ENCODE measurements at regions of chr12 and their contacts with region 1.

Region 1: GRCh38 chr12:69157023-69157655 is 82.2 kb upstream of the CPSF6 start:
- DNase-seq: peak; percentile 85
- H3K4me3 Mint-ChIP-seq: peak overlapping the region; percentile 30
- H3K27ac Mint-ChIP-seq: peak overlapping the region; percentile 45
- H3K4me1 Mint-ChIP-seq: peaks cover 45% of the 10 kb centered on the region
- H3K27me3 Mint-ChIP-seq: no peaks in the 10 kb centered on the region

Region 2: GRCh38 chr12:68374307-68374982 is 782.7 kb before region 1 on chr12:
- intact Hi-C with region 1: loop called (anchors 1 kb)
- DNase-seq: peak; percentile 60
- H3K4me3 Mint-ChIP-seq: peak overlapping the region; percentile 31
- H3K27ac Mint-ChIP-seq: peak overlapping the region; percentile 93
- H3K4me1 Mint-ChIP-seq: peaks cover 68% of the 10 kb centered on the region
- H3K27me3 Mint-ChIP-seq: no peaks in the 10 kb centered on the region

Region 3: DNA sequence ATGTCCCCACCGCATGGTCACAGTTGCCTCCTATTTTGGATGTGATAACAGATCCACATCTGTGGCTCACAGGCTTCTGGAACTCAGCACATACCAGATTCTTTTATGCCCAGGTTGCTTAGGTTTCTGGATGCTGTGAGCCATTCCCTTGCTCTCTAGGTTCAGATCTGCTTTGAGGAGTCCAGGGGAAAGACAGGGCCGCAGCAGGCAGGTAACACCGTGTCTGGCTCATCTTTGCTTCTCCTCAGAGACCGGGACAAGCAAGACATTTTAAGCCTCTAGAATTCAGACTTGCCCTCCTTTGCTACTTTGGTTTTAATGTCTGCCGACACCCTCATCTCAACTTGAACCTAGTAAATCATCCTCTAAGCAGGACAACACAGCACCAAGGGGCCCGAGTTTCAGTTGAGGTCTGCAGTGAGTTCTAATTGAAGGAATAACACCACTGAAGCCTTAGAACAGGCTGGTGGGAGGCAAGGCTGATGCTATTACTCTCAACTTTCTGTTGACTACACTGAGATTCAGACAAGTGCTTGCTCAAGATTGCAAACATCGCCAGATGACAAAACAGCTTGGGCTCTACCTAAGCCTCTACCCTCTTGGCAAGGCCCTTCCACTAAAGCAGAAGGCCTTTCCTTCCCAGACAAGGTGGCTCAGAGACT is 293.9 kb before region 1 on chr12:
- intact Hi-C with region 1: loop called (anchors 1 kb)
- DNase-seq: no peak
- H3K4me3 Mint-ChIP-seq: no peak overlapping the region
- H3K27ac Mint-ChIP-seq: no peak overlapping the region
- H3K4me1 Mint-ChIP-seq: peaks cover 18% of the 10 kb centered on the region
- H3K27me3 Mint-ChIP-seq: no peaks in the 10 kb centered on the region

Region 4: GRCh38 chr12:69239352-69239921 is 82.3 kb after region 1 on chr12 and contains the start of gene CPSF6:
- intact Hi-C with region 1: loop called (anchors 1 kb)
- DNase-seq: peak; percentile 94
- H3K4me3 Mint-ChIP-seq: peak within 1 kb of the TSS; percentile 100
- H3K27ac Mint-ChIP-seq: peak within 1 kb of the TSS; percentile 99
- H3K4me1 Mint-ChIP-seq: peaks cover 47% of the 10 kb centered on the region
- H3K27me3 Mint-ChIP-seq: peaks cover 7% of the 10 kb centered on the region
- total RNA-seq, gene CPSF6: 114 and 115 TPM in 2 replicates

Region 5: DNA sequence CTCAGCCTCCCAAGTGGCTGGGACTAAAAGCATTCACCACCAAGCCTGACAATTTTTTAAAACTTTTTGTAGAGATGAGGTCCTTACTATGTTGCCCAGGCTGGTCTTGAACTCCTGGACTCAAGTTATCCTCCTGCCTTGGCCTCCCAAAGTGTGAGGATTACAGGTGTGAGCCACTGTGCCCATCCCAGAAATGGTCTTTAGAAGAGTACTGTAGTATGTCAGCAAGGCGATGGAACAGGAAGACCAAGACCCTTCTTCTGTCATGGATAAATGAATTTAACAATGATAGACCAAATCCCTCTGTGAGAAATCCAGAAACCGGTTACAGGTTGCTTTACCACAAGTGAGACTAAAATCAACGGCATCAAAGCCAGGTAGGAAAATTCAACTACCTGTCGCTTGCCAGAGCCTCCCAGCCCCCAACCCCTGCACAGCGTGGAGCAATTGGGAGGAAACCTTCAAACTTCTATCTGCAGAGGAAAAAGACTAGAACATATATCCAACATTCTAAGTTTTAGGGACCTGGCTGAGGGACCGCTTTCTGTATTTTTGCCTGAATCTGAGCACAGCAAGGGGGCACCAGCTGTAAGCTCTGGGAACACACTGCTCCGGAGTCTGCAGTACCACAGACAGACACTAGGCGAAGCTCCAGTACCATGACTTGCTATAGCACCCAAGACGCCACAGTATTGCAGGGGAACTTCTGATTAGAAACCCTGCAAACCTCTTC is 133.6 kb after region 1 on chr12:
- intact Hi-C with region 1: loop called (anchors 1 kb)
- DNase-seq: peak; percentile 60
- H3K4me3 Mint-ChIP-seq: no peak overlapping the region
- H3K27ac Mint-ChIP-seq: no peak overlapping the region
- H3K4me1 Mint-ChIP-seq: no peaks in the 10 kb centered on the region
- H3K27me3 Mint-ChIP-seq: peaks cover 27% of the 10 kb centered on the region

Region 6: GRCh38 chr12:69470189-69471075 is 313.3 kb after region 1 on chr12 and contains the start of gene FRS2:
- intact Hi-C with region 1: loop called (anchors 5 kb)
- DNase-seq: peak; percentile 79
- H3K4me3 Mint-ChIP-seq: peak within 1 kb of the TSS; percentile 98
- H3K27ac Mint-ChIP-seq: peak within 1 kb of the TSS; percentile 97
- H3K4me1 Mint-ChIP-seq: peaks cover 50% of the 10 kb centered on the region
- H3K27me3 Mint-ChIP-seq: no peaks in the 10 kb centered on the region
- total RNA-seq, gene FRS2: 13.1 and 13.7 TPM in 2 replicates

Region 7: GRCh38 chr12:69585189-69586062 is 428.3 kb after region 1 on chr12 and contains the start of gene CCT2:
- intact Hi-C with region 1: loop called (anchors 2 kb)
- DNase-seq: peak; percentile 94
- H3K4me3 Mint-ChIP-seq: peak within 1 kb of the TSS; percentile 98
- H3K27ac Mint-ChIP-seq: peak within 1 kb of the TSS; percentile 97
- H3K4me1 Mint-ChIP-seq: peaks cover 11% of the 10 kb centered on the region
- H3K27me3 Mint-ChIP-seq: no peaks in the 10 kb centered on the region
- total RNA-seq, gene CCT2: 442 and 447 TPM in 2 replicates